ENCODE measurements at regions of chr11 and their contacts with region 1.

Region 1: GRCh38 chr11:121482231-121483129 is 29.7 kb upstream of the SORL1-AS1 start:
- DNase-seq: peak; percentile 72 to 87
- ATAC-seq: peak; percentile 69 to 87 (median 77)
- H3K4me3 ChIP-seq: peak overlapping the region; percentile 41
- H3K4me3 Mint-ChIP-seq: peak overlapping the region; percentile 89
- H3K27ac ChIP-seq: peak overlapping the region; percentile 93
- H3K27ac Mint-ChIP-seq: peak overlapping the region; percentile 94 to 95
- H3K4me1 ChIP-seq: peaks cover 94% of the 10 kb centered on the region
- H3K4me1 Mint-ChIP-seq: peaks cover 59 to 87% of the 10 kb centered on the region in 2 donors
- H3K27me3 ChIP-seq: no peaks in the 10 kb centered on the region
- H3K27me3 Mint-ChIP-seq: no peaks in the 10 kb centered on the region
- CTCF ChIP-seq: no peak

Region 2: DNA sequence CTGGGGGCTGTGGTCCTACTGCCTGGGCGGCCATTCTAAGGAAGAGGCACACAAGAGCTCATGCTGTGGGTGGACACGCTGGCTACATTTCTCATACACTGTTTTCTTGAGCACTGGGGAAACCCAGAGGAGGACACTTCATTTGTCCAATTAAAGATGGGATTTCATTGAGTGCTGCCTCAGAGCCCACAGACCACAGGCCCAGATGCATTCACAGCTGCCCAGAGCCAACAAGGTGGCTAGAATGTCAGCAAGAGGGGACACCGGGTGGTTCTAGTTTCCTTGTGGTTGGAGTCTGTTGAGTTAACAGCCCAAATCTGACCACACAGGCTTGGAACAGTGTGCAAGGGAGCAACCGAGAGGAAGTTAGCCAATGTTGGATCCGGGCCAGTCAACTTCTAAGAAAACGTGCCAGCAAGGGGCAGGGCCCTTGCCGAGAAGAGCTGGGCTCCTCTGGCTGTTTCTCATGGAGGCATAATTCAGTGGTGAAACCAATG is 65.4 kb before region 1 on chr11:
- intact Hi-C with region 1: loop called (anchors 1 kb)
- DNase-seq: peak; percentile 39 to 72
- ATAC-seq: peak; percentile 52 to 79 (median 61)
- H3K4me3 ChIP-seq: no peak overlapping the region
- H3K4me3 Mint-ChIP-seq: peak overlapping the region; percentile 55
- H3K27ac ChIP-seq: peak overlapping the region; percentile 70
- H3K27ac Mint-ChIP-seq: peak overlapping the region; percentile 87 to 89
- H3K4me1 ChIP-seq: peaks cover 32% of the 10 kb centered on the region
- H3K4me1 Mint-ChIP-seq: peaks cover 29 to 42% of the 10 kb centered on the region in 2 donors
- H3K27me3 ChIP-seq: no peaks in the 10 kb centered on the region
- H3K27me3 Mint-ChIP-seq: no peaks in the 10 kb centered on the region
- CTCF ChIP-seq: no peak

Region 3: DNA sequence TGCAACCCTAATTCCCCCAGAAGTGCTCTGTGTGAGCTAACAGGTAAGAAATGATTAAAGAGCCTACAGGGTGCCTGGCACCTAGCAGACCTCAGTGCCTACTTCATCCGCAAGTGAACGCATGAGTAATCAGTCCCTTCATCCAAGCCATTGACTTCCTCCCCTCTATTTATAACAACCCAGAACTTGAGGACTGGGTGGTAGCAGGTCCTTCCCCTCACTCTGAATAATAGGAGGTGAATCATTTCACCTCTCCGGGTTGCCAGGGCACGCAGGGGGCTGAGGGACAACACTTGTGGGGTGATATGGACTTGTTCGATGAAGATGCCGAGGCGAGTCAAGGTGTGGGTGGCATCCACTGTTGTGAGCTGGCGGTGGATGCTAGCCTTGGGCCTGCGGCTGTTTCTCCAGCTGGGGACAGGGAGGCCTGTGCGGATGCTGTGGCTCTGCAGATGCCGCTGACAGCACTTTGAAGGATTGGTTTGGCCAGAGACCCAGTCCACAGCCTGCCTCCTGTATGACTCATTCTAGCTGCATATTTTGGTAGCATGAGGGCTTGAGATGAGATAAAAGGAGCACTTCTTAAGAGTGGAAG is 18.0 kb before region 1 on chr11:
- intact Hi-C with region 1: loop called (anchors 1 kb)
- DNase-seq: peak; percentile 76 to 77
- ATAC-seq: peak; percentile 70 to 73 (median 70)
- H3K4me3 ChIP-seq: no peak overlapping the region
- H3K4me3 Mint-ChIP-seq: peak overlapping the region; percentile 86
- H3K27ac ChIP-seq: peak overlapping the region; percentile 68
- H3K27ac Mint-ChIP-seq: peak overlapping the region; percentile 98 to 99
- H3K4me1 ChIP-seq: peaks cover 92% of the 10 kb centered on the region
- H3K4me1 Mint-ChIP-seq: peaks cover 96 to 99% of the 10 kb centered on the region in 2 donors
- H3K27me3 ChIP-seq: no peaks in the 10 kb centered on the region
- H3K27me3 Mint-ChIP-seq: no peaks in the 10 kb centered on the region
- CTCF ChIP-seq: no peak

Region 4: DNA sequence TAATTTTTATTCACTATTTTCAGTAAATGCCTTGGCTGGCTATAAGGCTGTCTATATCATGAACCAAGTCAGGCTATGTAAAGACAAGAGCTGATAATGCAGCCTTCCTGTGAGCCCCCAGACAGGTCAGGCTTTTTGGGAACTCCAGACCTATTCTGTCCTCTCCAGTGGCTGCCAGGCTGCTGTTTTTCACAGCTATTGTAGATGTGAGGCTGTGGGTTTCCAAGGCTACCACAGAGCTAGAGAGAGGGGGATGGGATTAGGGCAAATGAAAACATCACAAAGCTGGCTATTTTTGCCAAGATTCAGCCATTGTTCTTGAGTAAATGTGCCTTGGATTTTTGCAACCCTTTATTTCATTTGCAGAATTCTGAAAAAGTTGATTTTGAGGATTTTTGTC is 26.0 kb after region 1 on chr11:
- intact Hi-C with region 1: loop called (anchors 1 kb)
- DNase-seq: peak; percentile 42 to 50
- ATAC-seq: peak; percentile 85 to 95 (median 94)
- H3K4me3 ChIP-seq: no peak overlapping the region
- H3K4me3 Mint-ChIP-seq: peak overlapping the region; percentile 78
- H3K27ac ChIP-seq: peak overlapping the region; percentile 62
- H3K27ac Mint-ChIP-seq: peak overlapping the region; percentile 92 to 93
- H3K4me1 ChIP-seq: peaks cover 20% of the 10 kb centered on the region
- H3K4me1 Mint-ChIP-seq: peaks cover 67 to 75% of the 10 kb centered on the region in 2 donors
- H3K27me3 ChIP-seq: no peaks in the 10 kb centered on the region
- H3K27me3 Mint-ChIP-seq: no peaks in the 10 kb centered on the region
- CTCF ChIP-seq: no peak

Region 5: DNA sequence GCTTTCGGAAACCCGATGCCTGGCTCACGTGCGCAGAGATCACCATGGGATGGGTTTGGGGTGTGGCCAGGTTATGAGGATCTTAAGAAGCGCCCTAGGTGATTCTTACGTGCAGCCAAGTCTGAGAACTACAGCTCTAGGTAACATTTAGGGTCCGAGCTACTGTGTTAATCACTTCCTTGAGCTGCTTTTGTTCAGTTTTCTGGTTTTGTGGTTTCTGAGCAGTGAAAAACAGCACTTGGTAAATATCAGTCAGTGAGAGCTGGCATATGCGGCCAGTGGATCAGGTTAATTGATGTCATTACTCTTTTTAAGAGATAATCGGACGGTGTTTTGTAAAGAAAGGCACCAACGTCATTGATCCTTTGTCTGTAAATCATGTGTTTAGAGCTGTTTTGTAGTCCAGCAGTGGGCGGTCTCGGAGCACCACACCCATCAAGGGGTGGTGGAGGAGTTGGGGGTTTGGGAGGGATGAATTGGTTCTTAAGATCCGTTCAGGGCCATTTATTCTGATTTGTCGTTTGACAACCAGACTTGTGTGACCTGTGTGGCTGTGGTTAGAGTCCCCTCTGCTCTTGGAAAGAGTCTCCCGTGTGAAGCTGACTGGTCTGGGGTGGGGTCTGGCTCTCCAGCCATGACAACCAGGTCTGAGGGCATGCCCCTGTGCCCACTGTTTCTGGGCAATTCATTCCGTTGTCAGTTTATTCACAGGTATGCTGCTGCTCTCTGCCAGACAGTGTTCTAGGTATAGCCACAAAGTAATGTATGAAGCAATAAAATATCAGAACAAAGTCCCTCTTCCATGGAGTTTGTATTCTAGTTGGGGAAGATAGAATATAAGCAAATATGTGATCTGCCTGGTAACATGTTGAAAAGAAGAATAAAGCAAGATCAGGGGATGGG is 32.2 kb after region 1 on chr11:
- intact Hi-C with region 1: loop called (anchors 1 kb)
- DNase-seq: peak; percentile 22 to 40
- ATAC-seq: peak; percentile 68 to 79 (median 73)
- H3K4me3 ChIP-seq: no peak overlapping the region
- H3K4me3 Mint-ChIP-seq: peak overlapping the region; percentile 64
- H3K27ac ChIP-seq: peak overlapping the region; percentile 87
- H3K27ac Mint-ChIP-seq: peak overlapping the region; percentile 95
- H3K4me1 ChIP-seq: peaks cover 46% of the 10 kb centered on the region
- H3K4me1 Mint-ChIP-seq: peaks cover 72 to 80% of the 10 kb centered on the region in 2 donors
- H3K27me3 ChIP-seq: no peaks in the 10 kb centered on the region
- H3K27me3 Mint-ChIP-seq: no peaks in the 10 kb centered on the region
- CTCF ChIP-seq: no peak

Measured in natural killer cell (primary cell).